Breast epithelium (tissue), 4 donors: ENCODE measurements at regions of chr11 and their contacts with region 1.

Region 1: GRCh38 chr11:87391496-87391895 is 353.8 kb downstream of the TMEM135 start:
- DNase-seq: no peak
- H3K4me3 ChIP-seq: no peak overlapping the region
- H3K27ac ChIP-seq: no peak overlapping the region
- H3K4me1 ChIP-seq: no peaks in the 10 kb centered on the region
- H3K27me3 ChIP-seq: no peaks in the 10 kb centered on the region
- CTCF ChIP-seq: no peak
- POLR2A ChIP-seq: no peak

Region 2: GRCh38 chr11:87359401-87359800 is 32.1 kb before region 1 on chr11:
- intact Hi-C with region 1: no loop called
- DNase-seq: no peak
- H3K4me3 ChIP-seq: no peak overlapping the region
- H3K27ac ChIP-seq: no peak overlapping the region
- H3K4me1 ChIP-seq: no peaks in the 10 kb centered on the region
- H3K27me3 ChIP-seq: no peaks in the 10 kb centered on the region
- CTCF ChIP-seq: no peak
- POLR2A ChIP-seq: no peak

Region 3: GRCh38 chr11:87425943-87426342 is 34.4 kb after region 1 on chr11:
- intact Hi-C with region 1: loop called (anchors 5 kb)
- DNase-seq: no peak
- H3K4me3 ChIP-seq: no peak overlapping the region
- H3K27ac ChIP-seq: no peak overlapping the region
- H3K4me1 ChIP-seq: no peaks in the 10 kb centered on the region
- H3K27me3 ChIP-seq: no peaks in the 10 kb centered on the region
- CTCF ChIP-seq: no peak
- POLR2A ChIP-seq: no peak

Region 4: GRCh38 chr11:88370782-88371181 is 979.3 kb after region 1 on chr11:
- intact Hi-C with region 1: loop called (anchors 5 kb)
- DNase-seq: no peak
- H3K4me3 ChIP-seq: no peak overlapping the region
- H3K27ac ChIP-seq: no peak overlapping the region
- H3K4me1 ChIP-seq: no peaks in the 10 kb centered on the region
- H3K27me3 ChIP-seq: no peaks in the 10 kb centered on the region
- CTCF ChIP-seq: no peak
- POLR2A ChIP-seq: no peak